ENCODE measurements at regions of chr14 and their contacts with region 1.

Region 1: GRCh38 chr14:21078726-21079125 is 8.6 kb downstream of the ARHGEF40 start:
- DNase-seq: no peak

Region 2: DNA sequence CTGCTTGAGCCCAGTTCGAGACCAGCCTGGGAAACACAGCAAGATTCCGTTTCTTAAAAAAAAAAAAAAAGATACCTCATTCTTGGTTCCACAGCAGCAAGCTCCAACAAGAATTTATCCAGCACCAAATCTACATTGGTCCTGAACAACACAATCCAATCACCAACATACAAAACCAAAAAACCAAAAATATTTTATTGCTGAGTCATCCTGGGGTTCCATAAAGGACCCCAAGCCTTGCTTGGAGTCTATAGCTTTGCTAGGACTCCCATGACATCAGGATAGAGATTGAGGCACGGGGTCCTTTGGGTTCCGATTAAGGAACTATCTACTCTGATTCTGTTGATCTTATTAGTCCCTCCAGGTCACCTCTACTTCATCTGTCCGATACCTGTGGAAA is 631.8 kb before region 1 on chr14:
- intact Hi-C with region 1: no loop called
- DNase-seq: no peak

Region 3: DNA sequence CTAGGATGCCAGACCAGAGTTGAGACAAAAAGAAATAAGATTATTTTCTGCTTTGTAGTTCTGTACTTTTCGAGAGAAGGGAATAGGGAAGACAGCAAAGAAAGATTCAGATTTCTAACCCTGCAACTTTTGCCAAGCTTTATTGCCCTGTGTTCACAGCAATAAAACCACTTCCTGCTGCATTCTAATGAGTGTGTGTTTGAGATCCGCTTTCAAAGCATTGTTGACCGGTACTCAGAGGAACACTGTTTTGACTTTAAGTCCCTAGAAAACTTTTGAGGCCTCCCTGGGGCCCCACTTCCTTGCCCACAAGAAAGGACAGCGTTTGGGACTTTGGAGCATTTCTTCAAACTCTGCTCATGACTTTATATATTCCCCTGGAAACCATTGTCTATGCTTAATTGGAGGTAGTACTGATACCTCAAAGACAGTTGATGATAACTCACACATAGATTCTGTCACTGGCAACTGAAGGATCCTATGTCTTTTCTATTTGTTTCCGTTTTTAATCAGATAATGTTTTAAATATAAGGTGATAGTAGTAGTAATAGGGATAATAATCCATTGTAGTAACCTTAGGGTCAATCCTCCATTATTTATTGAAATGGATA is 296.3 kb before region 1 on chr14:
- intact Hi-C with region 1: no loop called
- DNase-seq: no peak

Region 4: DNA sequence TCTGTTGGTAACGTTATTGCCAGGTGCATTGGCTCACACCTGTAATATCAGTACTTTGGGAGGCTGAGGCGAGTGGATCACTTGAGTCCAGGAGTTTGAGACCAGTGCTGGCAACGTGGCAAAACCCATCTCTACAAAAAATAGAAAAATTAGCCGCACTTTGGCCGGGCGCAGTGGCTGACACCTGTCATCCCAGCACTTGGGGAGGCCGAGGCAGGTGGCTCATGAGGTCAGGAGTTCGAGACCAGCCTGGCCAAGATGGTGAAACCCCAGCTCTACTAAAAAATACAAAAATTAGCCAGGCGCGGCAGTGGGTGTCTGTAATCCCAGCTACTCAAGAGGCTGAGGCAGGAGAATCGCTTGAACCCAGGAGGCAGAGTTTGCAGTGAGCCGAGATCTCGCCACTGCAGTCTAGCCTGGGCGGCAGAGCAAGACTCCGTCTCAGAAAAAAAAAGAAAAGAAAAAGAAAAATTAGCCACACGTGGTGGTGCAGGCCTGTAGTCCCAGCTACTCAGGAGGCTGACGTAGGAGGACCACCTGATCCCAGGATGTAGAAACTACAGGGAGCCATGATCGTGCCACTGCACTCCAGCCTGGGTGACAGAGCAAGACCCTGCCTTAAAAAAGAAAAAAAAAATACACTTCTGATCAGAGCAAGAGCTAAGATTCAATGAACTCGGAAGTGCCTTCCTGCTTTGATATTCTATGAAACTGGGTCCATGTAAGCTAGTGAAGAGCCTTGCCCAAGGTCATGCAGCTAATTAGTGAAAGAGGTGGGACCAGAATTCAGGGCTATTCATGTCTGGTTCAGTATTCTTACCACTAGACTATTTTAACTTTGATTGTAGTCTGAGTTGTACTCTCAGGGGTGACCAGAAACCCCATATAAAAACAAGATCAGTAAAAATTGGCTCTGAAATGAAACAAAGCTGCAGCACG is 25.3 kb before region 1 on chr14:
- intact Hi-C with region 1: loop called in 1 of 2 experiments (anchors 1 kb)
- DNase-seq: no peak